Left ventricle myocardium superior (tissue), 1 donor: ENCODE measurements at regions of chrX and their contacts with region 1.

Region 1: DNA sequence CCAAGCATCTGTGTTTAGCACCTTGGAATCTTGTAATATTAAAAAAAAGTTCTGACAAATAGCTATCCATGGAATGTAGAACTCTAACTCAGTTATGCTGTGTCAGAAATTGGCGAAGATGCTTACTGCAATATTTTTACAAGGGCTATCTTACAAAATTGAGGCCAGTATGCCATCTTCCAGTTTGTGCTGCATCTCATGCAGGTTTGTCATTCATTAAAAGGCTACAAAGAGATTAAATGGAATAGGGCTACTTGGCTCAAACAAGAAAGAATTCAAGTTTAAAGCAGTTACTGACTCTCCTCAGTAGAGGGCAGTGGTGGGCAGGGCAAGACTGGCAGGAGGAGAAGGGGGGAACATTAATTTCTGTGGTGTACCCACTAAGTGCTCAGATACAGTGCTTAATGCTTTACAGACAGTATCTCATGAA is 66.5 kb downstream of the SHROOM4 start:
- DNase-seq: peak; percentile 20
- ATAC-seq: no peak

Region 2: DNA sequence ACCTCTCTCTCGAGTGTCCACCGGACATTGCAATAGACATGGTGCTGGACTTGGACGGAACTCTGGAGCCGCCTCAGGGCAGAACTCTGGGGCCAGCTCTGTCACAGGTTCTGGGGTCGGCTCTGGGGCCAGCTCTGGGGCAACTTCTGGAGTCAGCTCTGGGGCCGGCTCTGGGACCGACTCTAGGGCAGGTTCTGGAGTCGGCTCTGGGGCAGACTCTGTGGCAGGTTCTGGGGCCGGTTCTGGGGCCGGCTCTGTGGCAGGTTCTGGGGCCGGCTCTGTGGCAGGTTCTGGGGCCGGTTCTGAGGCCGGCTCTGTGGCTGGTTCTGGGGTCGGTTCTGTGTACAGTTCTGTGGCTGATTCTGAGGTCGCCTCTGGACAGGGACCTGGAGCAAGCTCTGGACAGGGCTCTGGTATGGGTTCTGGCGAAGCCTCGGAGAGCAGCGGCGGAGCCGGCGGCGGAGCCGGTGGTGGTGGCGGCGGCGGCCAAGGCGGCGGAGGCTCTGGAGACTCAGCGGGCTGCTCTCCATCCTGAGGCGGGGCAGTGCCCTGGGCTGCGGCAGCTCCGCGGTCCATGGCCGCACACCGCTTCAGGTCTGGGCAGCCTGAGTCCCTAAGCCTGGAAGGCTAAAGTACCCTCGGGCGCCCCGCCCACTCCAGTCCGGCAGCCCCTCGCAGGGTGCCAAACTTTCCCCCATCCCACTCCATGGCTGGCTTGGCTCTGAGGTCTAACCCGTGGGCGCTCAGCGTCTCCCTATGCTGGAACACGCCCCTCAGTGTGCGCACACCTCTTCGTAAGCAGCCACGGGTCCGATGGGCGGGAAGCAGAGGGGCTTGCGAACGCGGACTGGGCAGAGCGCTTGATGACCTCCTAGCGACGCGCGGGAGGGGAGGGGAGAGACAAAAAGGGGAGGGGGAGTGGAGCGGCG is 277.1 kb before region 1 on chrX and contains the start of gene DGKK:
- intact Hi-C with region 1: no loop called
- DNase-seq: no peak
- ATAC-seq: no peak
- total RNA-seq, gene DGKK: not detected

Region 3: DNA sequence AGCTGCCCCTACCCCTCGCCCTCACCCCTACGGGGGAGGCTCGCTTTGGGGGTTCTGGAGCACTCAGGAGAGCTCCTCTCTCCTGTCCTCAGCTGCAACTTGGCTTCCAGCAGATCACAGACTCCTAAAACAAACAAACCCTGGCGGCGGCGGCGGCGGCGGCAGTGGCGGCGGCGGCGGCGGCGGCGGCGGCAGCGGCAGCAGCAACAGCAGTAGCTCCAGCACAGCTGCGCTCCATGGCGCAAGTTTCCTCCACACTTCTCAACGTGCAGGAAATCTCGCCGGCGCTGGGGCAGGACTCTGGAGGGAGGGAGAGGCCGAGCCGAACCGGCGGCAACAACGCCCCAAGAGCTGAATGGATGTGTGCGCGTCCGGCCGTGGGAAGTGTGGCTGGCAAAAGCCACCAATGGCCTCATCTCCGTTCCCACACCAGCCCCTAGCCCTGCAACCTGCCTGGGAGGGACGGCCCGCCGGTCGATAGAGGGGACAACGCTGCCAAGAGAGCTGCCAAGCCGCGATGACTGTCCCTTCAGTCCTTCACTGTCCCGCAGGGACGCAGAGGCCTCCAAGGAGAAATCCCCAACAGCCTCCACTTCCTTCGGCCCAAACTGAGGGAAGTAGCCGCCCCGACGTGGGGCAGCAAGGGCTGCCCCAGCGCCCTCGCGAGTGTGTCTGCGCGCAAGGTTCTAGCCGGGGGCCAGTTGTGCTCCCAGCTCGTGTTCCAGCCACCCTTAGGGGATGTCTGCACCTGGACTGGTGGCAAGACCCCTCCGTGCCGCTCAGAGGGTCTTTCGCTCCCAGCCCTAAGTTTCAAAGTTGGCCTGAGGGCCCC is 65.7 kb after region 1 on chrX:
- intact Hi-C with region 1: loop called (anchors 10 kb)
- DNase-seq: peak; percentile 63
- ATAC-seq: peak; percentile 80

Region 4: DNA sequence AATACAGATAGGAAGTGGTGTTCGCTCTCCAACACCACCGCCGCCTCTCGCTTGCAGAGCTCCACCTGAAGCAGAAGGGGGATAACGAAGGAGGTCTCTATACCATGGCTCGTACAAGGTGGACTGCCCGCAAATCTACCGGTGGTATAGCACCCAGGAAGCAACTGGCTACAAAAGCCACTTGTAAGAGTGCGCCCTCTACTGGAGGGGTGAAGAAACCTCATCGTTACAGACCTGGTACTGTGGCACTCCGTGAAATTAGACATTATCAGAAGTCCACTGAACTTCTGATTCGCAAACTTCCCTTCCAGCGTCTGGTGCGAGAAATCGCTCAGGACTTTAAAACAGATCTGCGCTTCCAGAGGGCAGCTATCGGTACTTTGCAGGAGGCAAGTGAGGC is 157.8 kb after region 1 on chrX:
- intact Hi-C with region 1: loop called (anchors 2 kb)
- DNase-seq: no peak
- ATAC-seq: no peak

Region 5: GRCh38 chrX:50988649-50989048 is 241.2 kb after region 1 on chrX:
- intact Hi-C with region 1: loop called (anchors 5 kb)
- DNase-seq: no peak
- ATAC-seq: peak; percentile 19